H1 (cell line): ENCODE measurements at regions of chr12 and their contacts with region 1.

Region 1: DNA sequence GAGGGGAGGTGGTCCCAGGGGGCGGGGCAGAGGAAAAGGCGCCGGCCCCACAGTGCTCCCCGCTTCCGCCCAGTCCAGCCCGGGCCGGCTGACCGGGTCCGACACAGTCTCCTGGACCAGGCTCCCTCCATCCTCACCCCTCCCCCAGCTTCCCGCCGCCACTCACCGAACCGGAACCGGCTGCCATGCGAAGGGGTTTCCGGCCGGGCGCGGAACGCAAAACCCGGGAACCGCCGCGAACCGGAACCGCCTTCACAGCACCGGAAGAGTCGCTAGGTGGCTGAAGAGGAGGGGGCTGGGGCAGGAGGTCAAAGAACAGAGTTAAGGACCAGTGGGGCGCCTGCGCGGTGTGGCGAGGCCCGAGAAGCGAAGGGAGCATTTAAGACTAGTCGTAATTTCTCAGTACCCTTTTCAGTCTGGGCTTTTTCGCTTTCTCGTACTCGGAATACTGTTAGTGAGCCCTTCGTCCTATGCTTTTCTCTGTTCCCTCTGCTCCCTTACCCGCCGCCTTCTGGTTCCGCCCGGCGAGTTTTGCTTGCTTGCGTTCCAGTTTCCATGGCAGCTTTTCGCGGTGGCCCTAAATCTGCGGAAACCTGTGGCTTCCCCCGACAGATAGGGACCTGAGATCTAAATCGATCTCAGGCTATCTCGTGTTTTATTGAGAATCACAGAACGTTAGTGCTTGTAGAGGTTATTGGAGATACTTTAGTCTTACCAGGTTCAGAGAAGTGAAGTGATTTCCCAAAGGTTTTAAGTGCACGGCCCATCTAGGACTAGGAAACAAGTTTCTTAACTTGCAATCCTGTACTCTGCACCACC is at the start of gene SENP1:
- DNase-seq: peak; percentile 51 to 94
- H3K4me3 ChIP-seq: peak within 1 kb of the TSS; percentile 93 to 99 (median 96)
- H3K27ac ChIP-seq: peak within 1 kb of the TSS; percentile 99
- H3K4me1 ChIP-seq: peaks cover 0 to 6% (median 3%) of the 10 kb centered on the region in 4 experiments; a peak in 4 of 7 replicates
- H3K27me3 ChIP-seq: peaks cover 0 to 5% (median 0%) of the 10 kb centered on the region in 4 experiments; a peak in 2 of 7 replicates
- CTCF ChIP-seq: no peak
- EP300 ChIP-seq: peak in 1 of 2 experiments; percentile 59; a peak in 1 of 3 replicates
- POLR2A ChIP-seq: peak; percentile 59 to 97
- RAD21 ChIP-seq: no peak
- total RNA-seq, gene SENP1: 29.8 and 31.5 TPM in 2 replicates

Region 2: DNA sequence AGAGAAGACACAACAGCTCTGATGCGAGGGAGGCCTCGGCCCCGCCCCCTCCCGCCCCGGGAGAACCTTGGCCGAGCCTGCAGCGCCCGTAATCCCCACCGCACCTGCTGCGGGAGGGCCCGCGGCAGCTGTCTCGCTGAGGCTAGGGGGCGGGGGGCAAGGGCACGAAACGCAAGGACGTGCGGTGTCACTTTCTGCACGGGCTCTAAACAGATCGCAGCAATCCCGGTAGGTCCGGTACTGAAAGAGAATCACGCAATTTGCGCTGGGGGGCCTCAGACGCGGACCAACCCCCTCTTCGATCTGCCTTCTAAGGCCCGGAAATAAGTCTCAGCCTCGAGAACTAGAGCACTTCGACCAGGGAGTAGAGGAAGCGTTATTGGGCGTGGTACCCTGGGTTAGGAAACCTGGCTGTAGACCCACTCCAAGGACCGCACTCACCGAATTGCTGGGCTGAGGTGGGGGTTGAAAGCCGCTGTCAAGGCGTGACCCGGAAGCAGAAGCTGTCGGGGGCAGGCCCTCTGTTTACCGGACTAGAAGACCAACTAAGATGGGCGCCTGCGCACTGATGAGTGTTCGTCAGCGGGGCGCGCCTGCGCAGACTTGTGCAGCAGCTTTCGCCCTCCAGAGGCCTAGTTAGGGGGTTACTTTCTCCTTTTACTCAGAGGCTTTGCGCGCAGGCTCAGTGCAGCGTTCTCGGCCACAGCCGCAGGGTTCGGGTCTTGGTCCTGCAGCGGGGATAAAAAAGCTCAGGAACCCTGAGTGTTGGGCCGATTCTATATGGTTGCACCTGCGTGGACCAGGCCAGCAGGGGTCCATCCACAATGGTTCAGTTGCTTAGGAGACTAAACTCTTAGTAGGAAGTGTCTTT is 51.2 kb after region 1 on chr12 and contains the start of gene ASB8:
- CTCF ChIA-PET with region 1: interaction called, 4 read pairs
- POLR2A ChIA-PET with region 1: interaction called, 21 read pairs
- DNase-seq: peak; percentile 96 to 99
- H3K4me3 ChIP-seq: peak within 1 kb of the TSS; percentile 86 to 94 (median 92)
- H3K27ac ChIP-seq: no peak within 1 kb of the TSS
- H3K4me1 ChIP-seq: peaks cover 0 to 5% (median under 1%) of the 10 kb centered on the region in 4 experiments; a peak in 2 of 7 replicates
- H3K27me3 ChIP-seq: no peaks in the 10 kb centered on the region
- CTCF ChIP-seq: peak; percentile 44 to 60 (median 46)
- EP300 ChIP-seq: no peak
- POLR2A ChIP-seq: peak in 1 of 2 experiments; percentile 64; a peak in 1 of 3 replicates
- RAD21 ChIP-seq: peak; percentile 22 to 40; a peak in 3 of 4 replicates
- total RNA-seq, gene ASB8: 8.1 and 8.3 TPM in 2 replicates

Region 3: GRCh38 chr12:48189331-48190125 is 83.5 kb after region 1 on chr12:
- CTCF ChIA-PET with region 1: interaction called, 11 read pairs
- POLR2A ChIA-PET with region 1: interaction called, 3 read pairs
- DNase-seq: peak in 1 of 2 experiments; percentile 84
- H3K4me3 ChIP-seq: no peak overlapping the region
- H3K27ac ChIP-seq: no peak overlapping the region
- H3K4me1 ChIP-seq: peaks cover 2 to 13% (median 7%) of the 10 kb centered on the region in 4 experiments; a peak in 6 of 7 replicates
- H3K27me3 ChIP-seq: peaks cover 2 to 16% (median 11%) of the 10 kb centered on the region in 4 experiments; a peak in 6 of 7 replicates
- CTCF ChIP-seq: peak in 2 of 3 experiments; percentile 74 to 86; a peak in 3 of 4 replicates
- EP300 ChIP-seq: no peak
- POLR2A ChIP-seq: no peak
- RAD21 ChIP-seq: peak; percentile 83 to 92